ENCODE measurements at regions of chr2 and their contacts with region 1.

Region 1: DNA sequence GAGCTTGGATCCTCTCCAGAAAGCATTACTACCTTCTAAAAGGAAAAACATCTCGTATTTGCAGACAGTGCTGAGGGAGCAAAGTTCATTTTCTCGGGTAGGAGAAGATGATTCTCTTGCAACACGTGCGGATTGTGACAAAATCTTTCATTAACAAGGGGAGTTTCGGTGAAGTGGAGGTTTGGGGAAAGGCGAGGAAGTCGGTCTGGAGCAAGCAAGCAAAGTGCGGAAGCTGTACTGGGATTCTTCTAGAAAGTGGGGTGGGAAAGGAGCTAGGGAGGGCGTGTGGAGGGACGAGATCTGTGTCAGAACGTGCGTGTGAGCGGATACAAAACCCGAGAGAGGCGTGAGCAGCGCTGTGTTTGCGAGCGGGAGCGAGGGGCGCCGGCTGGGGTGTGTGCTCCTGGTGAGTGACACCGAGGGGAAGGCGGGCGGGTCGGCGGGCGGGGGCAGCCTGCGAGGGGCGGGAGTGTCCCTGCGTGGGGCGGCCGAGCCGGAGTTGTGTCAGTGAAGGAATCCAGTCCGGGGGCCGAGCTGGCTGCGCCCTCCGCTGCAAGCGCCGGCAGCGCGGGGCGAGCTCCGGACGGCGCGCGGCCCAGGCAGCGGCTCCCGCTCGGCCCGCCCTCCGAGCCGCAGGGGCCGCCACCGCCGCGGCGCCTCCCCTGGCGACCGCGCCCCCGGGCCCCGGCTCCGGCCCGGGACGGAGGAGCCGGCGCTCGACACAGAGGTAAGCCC is at the start of gene SPATS2L:
- DNase-seq: peak; percentile 90 to 94
- H3K4me3 ChIP-seq: peak within 1 kb of the TSS; percentile 88
- H3K4me3 Mint-ChIP-seq: peak within 1 kb of the TSS; percentile 89
- H3K27ac Mint-ChIP-seq: peak within 1 kb of the TSS; percentile 97
- H3K4me1 ChIP-seq: peaks cover 69% of the 10 kb centered on the region
- H3K4me1 Mint-ChIP-seq: peaks cover 40% of the 10 kb centered on the region
- H3K27me3 ChIP-seq: no peaks in the 10 kb centered on the region
- H3K27me3 Mint-ChIP-seq: no peaks in the 10 kb centered on the region
- CTCF ChIP-seq: no peak
- total RNA-seq, gene SPATS2L: 189 and 196 TPM in 2 replicates

Region 2: DNA sequence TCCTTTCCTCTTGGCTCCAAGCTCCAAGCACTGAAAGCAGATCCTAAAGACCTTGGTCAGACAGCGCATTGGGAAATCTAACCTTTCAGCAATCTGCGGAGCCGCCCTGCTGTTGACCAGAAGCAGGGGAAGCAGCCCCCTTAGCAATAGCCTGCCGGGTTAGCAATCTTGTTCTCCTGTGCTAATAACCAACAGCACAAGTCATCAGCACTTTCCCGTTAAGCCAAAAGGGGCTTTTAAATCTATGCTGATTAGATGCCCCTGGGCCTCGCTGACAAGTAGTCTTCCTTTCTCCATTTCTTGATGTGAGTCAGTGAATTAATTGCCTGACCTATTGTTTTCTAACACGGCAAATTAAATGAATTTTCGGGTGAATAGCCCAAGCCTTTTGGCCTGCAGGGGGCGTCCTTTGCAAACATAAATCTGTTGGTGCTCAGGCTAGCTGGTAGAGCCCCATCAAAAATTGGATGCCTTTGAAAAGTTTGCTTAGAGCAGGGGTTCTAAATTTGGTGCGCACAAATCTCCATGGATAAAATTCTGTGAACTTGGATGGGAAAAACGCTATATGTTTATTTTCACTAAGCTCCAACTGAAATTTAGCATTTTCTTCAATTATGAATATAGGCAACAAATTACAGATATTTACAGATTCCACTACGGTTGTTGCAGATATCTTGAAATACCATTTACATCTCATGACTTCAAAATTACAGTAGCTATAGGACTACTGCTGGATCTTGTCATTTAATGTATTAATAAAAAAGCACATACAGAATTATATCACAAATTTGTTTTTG is 326.3 kb before region 1 on chr2:
- CTCF ChIA-PET with region 1: interaction called, 3 read pairs
- POLR2A ChIA-PET with region 1: no interaction called
- intact Hi-C with region 1: loop called (anchors 1 kb)
- DNase-seq: peak; percentile 76 to 83
- H3K4me3 ChIP-seq: no peak overlapping the region
- H3K4me3 Mint-ChIP-seq: peak overlapping the region; percentile 9
- H3K27ac Mint-ChIP-seq: no peak overlapping the region
- H3K4me1 ChIP-seq: peaks cover 20% of the 10 kb centered on the region
- H3K4me1 Mint-ChIP-seq: peaks cover 20% of the 10 kb centered on the region
- H3K27me3 ChIP-seq: no peaks in the 10 kb centered on the region
- H3K27me3 Mint-ChIP-seq: no peaks in the 10 kb centered on the region
- CTCF ChIP-seq: peak; percentile 74 to 87

Region 3: DNA sequence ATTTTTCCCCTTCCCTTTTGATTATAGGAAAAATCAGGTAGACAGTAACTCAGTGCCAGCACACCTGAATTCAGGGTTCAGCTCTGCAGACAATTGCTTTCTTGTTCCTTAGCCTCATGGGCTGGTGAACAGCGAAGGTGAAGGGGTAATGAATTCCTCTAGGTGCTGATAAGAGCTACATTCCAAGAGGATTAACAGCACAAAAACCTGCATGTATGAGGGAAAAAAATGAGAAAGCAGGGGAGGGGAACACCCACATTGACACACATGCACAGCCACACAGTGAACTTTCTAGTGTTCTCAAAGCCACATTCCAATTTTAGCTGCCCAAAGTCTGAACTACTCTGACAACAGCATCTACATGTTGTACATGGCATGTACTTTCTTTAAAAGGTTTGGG is 46.3 kb after region 1 on chr2:
- CTCF ChIA-PET with region 1: interaction called, 3 read pairs
- POLR2A ChIA-PET with region 1: interaction called, 10 read pairs
- intact Hi-C with region 1: no loop called
- DNase-seq: peak; percentile 78 to 82
- H3K4me3 ChIP-seq: no peak overlapping the region
- H3K4me3 Mint-ChIP-seq: peak overlapping the region; percentile 67
- H3K27ac Mint-ChIP-seq: peak overlapping the region; percentile 89
- H3K4me1 ChIP-seq: peaks cover 78% of the 10 kb centered on the region
- H3K4me1 Mint-ChIP-seq: peaks cover 74% of the 10 kb centered on the region
- H3K27me3 ChIP-seq: no peaks in the 10 kb centered on the region
- H3K27me3 Mint-ChIP-seq: no peaks in the 10 kb centered on the region
- CTCF ChIP-seq: no peak

Region 4: GRCh38 chr2:200376513-200377354 is 70.4 kb after region 1 on chr2:
- CTCF ChIA-PET with region 1: no interaction called
- POLR2A ChIA-PET with region 1: interaction called, 11 read pairs
- intact Hi-C with region 1: loop called (anchors 1 kb)
- DNase-seq: peak in 1 of 2 experiments; percentile 57
- H3K4me3 ChIP-seq: no peak overlapping the region
- H3K4me3 Mint-ChIP-seq: peak overlapping the region; percentile 65
- H3K27ac Mint-ChIP-seq: peak overlapping the region; percentile 90
- H3K4me1 ChIP-seq: peaks cover 91% of the 10 kb centered on the region
- H3K4me1 Mint-ChIP-seq: peaks cover 74% of the 10 kb centered on the region
- H3K27me3 ChIP-seq: no peaks in the 10 kb centered on the region
- H3K27me3 Mint-ChIP-seq: no peaks in the 10 kb centered on the region
- CTCF ChIP-seq: no peak

Region 5: GRCh38 chr2:200428951-200429665 is 122.7 kb after region 1 on chr2:
- CTCF ChIA-PET with region 1: no interaction called
- POLR2A ChIA-PET with region 1: no interaction called
- intact Hi-C with region 1: loop called (anchors 5 kb)
- DNase-seq: no peak
- H3K4me3 ChIP-seq: no peak overlapping the region
- H3K4me3 Mint-ChIP-seq: no peak overlapping the region
- H3K27ac Mint-ChIP-seq: no peak overlapping the region
- H3K4me1 ChIP-seq: peaks cover 17% of the 10 kb centered on the region; the same call in 1 of the 2 replicates
- H3K4me1 Mint-ChIP-seq: peaks cover 7% of the 10 kb centered on the region
- H3K27me3 ChIP-seq: no peaks in the 10 kb centered on the region
- H3K27me3 Mint-ChIP-seq: no peaks in the 10 kb centered on the region
- CTCF ChIP-seq: no peak

Measured in Caco-2 (cell line).